ENCODE measurements at regions of chr19 and their contacts with region 1.

Region 1: GRCh38 chr19:10565567-10566407 is at the start of gene KRI1:
- DNase-seq: peak; percentile 99
- ATAC-seq: peak; percentile 51
- H3K4me3 Mint-ChIP-seq: peak within 1 kb of the TSS; percentile 98
- H3K27ac Mint-ChIP-seq: peak within 1 kb of the TSS; percentile 94
- H3K4me1 Mint-ChIP-seq: peaks cover 46% of the 10 kb centered on the region
- H3K27me3 Mint-ChIP-seq: no peaks in the 10 kb centered on the region
- total RNA-seq, gene KRI1: 64.0 to 72.8 TPM

Region 2: DNA sequence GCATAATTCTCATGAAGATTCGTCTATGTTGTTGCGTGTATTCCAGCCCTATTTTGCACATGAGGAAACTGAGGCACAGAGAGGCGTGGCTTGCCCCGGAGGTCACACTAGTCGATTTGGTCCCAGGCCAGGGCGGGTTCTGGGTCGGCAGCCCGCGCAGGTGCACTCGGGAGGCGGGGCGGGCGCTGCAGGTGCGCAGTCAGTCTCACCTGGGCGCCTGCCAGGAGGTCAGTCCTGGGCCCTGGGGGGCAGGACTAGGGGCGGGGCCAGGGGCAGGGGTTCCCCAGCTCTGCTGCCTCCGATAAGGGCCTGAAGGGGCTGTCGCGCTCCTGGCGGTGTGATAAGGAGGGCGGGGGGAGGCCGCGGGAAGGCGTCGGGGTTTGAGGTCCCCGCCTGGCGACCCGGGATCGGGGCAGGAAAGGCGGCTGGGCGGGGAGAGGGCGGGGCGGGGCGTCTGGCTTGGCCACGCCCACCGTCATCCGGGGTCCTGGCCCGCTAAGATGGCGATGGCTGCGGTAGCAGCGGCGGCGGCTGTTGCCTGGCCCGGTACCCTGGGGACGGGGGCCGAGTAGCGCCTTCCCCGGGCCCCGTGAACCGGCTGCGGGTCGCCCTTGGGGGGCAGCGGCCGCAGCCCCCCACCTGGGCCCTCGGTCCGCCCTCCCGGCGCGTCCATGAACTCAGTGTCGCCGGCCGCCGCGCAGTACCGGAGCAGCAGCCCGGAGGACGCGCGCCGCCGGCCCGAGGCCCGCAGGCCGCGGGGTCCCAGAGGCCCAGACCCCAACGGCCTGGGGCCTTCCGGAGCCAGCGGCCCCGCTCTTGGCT is 22.2 kb before region 1 on chr19 and contains the start of gene ATG4D:
- CTCF ChIA-PET with region 1: interaction called, 34 read pairs
- POLR2A ChIA-PET with region 1: interaction called, 5 read pairs
- DNase-seq: peak; percentile 85
- ATAC-seq: peak; percentile 85
- H3K4me3 Mint-ChIP-seq: peak within 1 kb of the TSS; percentile 90
- H3K27ac Mint-ChIP-seq: peak within 1 kb of the TSS; percentile 88
- H3K4me1 Mint-ChIP-seq: peaks cover 21% of the 10 kb centered on the region
- H3K27me3 Mint-ChIP-seq: peaks cover 15% of the 10 kb centered on the region
- total RNA-seq, gene ATG4D: 46.1 to 46.9 TPM

Region 3: GRCh38 chr19:10551698-10552301 is 14.0 kb before region 1 on chr19:
- CTCF ChIA-PET with region 1: interaction called, 76 read pairs
- POLR2A ChIA-PET with region 1: interaction called, 141 read pairs
- DNase-seq: peak; percentile 62
- ATAC-seq: no peak
- H3K4me3 Mint-ChIP-seq: peak overlapping the region; percentile 25
- H3K27ac Mint-ChIP-seq: peak overlapping the region; percentile 93
- H3K4me1 Mint-ChIP-seq: peaks cover 62% of the 10 kb centered on the region
- H3K27me3 Mint-ChIP-seq: no peaks in the 10 kb centered on the region

Region 4: GRCh38 chr19:10625003-10625776 is 59.4 kb after region 1 on chr19 and contains the start of gene SLC44A2:
- CTCF ChIA-PET with region 1: no interaction called
- POLR2A ChIA-PET with region 1: no interaction called
- DNase-seq: no peak
- ATAC-seq: no peak
- H3K4me3 Mint-ChIP-seq: peak within 1 kb of the TSS; percentile 34
- H3K27ac Mint-ChIP-seq: peak within 1 kb of the TSS; percentile 89
- H3K4me1 Mint-ChIP-seq: peaks cover 40% of the 10 kb centered on the region
- H3K27me3 Mint-ChIP-seq: no peaks in the 10 kb centered on the region
- total RNA-seq, gene SLC44A2: 112 to 121 TPM

Measured in activated CD8-positive, alpha-beta T cell treated with anti-CD3 and anti-CD28 coated beads, Interleukin-2, amount 10 ng/mL, durations not matched to agents 7 days and 5 days (primary cell).